ENCODE measurements at regions of chr1 and their contacts with region 1.

Region 1: GRCh38 chr1:185238447-185238846 is 78.6 kb downstream of the IVNS1ABP start:
- DNase-seq: no peak
- H3K4me3 ChIP-seq: no peak overlapping the region
- H3K27ac ChIP-seq: no peak overlapping the region
- H3K4me1 ChIP-seq: no peaks in the 10 kb centered on the region
- H3K27me3 ChIP-seq: no peaks in the 10 kb centered on the region
- CTCF ChIP-seq: peak; percentile 24

Region 2: DNA sequence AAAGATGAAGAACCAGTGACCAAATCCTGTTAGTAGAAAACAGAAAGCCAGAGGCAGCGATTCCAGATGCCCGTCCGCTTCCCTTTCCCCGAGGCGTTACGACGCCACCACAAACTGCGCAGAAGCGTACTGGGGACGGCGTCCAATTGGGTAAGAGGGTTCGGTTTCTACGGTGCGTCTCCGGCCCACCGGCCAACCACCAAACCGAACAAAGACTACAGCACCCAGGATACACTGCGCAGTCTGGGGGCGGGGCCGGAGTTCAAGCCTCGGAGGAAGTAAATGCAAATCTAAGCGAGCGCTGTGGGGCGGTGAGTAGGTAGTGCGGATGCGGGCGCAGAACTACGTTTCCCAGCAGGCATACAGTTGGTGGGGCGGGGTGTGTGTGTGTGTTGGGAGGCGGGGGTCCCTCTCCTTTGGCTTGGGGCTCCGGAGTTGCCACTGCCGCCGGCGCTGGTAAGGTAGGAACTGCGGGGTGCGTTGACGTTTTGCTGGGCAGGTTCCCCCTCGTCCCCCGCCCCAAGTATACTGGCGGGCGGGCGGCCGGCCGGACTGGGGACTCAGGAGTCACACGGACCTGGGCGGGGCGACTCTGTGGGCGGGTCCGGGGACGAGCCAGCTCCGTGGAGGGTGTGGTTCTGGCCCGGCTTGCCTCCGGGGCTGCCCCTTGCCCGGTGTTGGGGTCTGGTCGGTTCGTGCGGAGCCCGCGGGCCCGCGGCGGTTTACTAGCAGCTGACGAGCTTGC is 81.4 kb before region 1 on chr1 and contains the starts of genes SWT1 and TRMT1L:
- intact Hi-C with region 1: no loop called
- DNase-seq: peak; percentile 99 to 100 (median 100)
- H3K4me3 ChIP-seq: peak within 1 kb of the TSS; percentile 92 to 95 (median 94)
- H3K27ac ChIP-seq: peak within 1 kb of the TSS; percentile 99 to 100
- H3K4me1 ChIP-seq: peaks cover 0 to 25% (median 8%) of the 10 kb centered on the region in 3 donors
- H3K27me3 ChIP-seq: no peaks in the 10 kb centered on the region
- CTCF ChIP-seq: no peak
- total RNA-seq, gene SWT1: 6.5 TPM
- total RNA-seq, gene TRMT1L: 17.9 TPM

Region 3: GRCh38 chr1:185177360-185177759 is 61.1 kb before region 1 on chr1:
- intact Hi-C with region 1: no loop called
- DNase-seq: no peak
- H3K4me3 ChIP-seq: no peak overlapping the region
- H3K27ac ChIP-seq: no peak overlapping the region
- H3K4me1 ChIP-seq: no peaks in the 10 kb centered on the region
- H3K27me3 ChIP-seq: no peaks in the 10 kb centered on the region
- CTCF ChIP-seq: no peak

Region 4: GRCh38 chr1:185603158-185603557 is 364.7 kb after region 1 on chr1:
- intact Hi-C with region 1: no loop called
- DNase-seq: no peak
- H3K4me3 ChIP-seq: no peak overlapping the region
- H3K27ac ChIP-seq: no peak overlapping the region
- H3K4me1 ChIP-seq: no peaks in the 10 kb centered on the region
- H3K27me3 ChIP-seq: no peaks in the 10 kb centered on the region
- CTCF ChIP-seq: no peak

Region 5: DNA sequence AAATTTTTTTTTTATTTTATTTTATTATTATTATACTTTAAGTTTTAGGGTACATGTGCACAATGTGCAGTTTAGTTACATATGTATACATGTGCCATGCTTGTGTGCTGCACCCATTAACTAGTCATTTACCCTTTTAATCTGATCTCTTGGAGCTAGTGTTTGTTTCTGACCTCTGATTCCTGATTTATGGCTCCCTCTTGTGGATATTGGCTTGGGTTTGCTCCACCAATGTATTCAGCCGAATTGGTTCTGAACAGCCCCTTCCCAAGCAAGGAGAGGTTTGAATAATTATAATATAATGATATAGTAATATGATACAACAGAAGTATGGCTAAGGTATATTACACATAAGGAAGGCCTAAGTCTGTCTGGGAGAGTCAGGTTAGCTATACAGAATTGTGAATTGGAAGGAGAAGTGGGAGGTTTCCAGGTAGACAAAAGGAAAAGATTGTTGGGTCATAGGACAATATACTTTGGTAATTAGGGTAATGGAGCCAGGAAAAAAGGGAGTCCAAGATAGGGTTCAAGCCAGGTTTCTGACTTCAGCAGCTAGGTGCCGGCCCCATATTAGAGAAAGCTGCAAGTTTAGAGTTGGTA is 442.7 kb after region 1 on chr1:
- intact Hi-C with region 1: loop called (anchors 10 kb)
- DNase-seq: peak in 2 of 5 donors; percentile 49 to 67
- H3K4me3 ChIP-seq: no peak overlapping the region
- H3K27ac ChIP-seq: no peak overlapping the region
- H3K4me1 ChIP-seq: peaks cover 0 to 17% (median 7%) of the 10 kb centered on the region in 3 donors
- H3K27me3 ChIP-seq: no peaks in the 10 kb centered on the region
- CTCF ChIP-seq: peak; percentile 69